Stomach (tissue), 19 donors: ENCODE measurements at regions of chr12 and their contacts with region 1.

Region 1: GRCh38 chr12:19744734-19745218 is 305.5 kb downstream of the AEBP2 start:
- DNase-seq: peak in 1 of 2 donors; percentile 63
- H3K4me3 ChIP-seq: no peak overlapping the region
- H3K27ac ChIP-seq: peak overlapping the region in 1 of 5 donors; percentile 22
- H3K4me1 ChIP-seq: peaks cover 0 to 6% (median 0%) of the 10 kb centered on the region in 4 donors
- H3K27me3 ChIP-seq: no peaks in the 10 kb centered on the region
- CTCF ChIP-seq: no peak
- EP300 ChIP-seq: no peak
- POLR2A ChIP-seq: no peak

Region 2: DNA sequence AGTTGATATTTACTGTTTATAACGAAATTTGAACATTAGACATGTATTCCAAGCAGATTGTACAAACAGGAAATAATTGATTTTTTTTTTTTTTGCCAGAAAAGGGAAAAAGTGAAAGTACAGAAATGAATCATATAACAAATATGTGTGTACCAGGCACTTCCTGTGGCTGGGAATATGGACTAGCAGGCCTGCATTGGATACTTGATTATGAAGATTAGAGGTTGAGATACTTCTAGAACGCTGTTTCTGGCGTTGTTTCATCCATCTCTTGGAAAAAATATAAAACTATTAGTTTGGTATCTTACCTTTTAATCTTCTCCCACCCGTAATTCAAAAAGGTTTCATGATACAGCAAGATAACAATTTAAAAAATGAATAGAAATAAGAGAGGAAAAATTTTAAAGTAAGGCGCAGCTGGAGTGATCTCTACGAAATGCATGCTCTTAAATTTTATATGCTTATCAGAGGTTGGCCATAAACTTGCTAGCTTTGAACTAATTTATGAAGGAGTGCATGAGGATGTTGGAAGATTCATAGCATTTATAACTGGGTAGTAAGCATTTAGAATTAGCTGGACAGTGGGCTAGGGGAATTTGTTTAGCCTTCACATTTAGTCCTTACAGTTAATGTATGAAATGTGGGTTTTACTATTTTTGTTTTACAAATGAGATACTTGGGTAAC is 214.7 kb before region 1 on chr12:
- intact Hi-C with region 1: no loop called
- DNase-seq: no peak
- H3K4me3 ChIP-seq: no peak overlapping the region
- H3K27ac ChIP-seq: no peak overlapping the region
- H3K4me1 ChIP-seq: peaks cover 0 to 10% (median 4%) of the 10 kb centered on the region in 4 donors
- H3K27me3 ChIP-seq: no peaks in the 10 kb centered on the region
- CTCF ChIP-seq: no peak
- EP300 ChIP-seq: no peak
- POLR2A ChIP-seq: no peak

Region 3: GRCh38 chr12:19608039-19608438 is 136.7 kb before region 1 on chr12:
- intact Hi-C with region 1: no loop called
- DNase-seq: no peak
- H3K4me3 ChIP-seq: no peak overlapping the region
- H3K27ac ChIP-seq: no peak overlapping the region
- H3K4me1 ChIP-seq: peaks cover 0 to 7% (median 0%) of the 10 kb centered on the region in 4 donors
- H3K27me3 ChIP-seq: no peaks in the 10 kb centered on the region
- CTCF ChIP-seq: no peak
- EP300 ChIP-seq: no peak
- POLR2A ChIP-seq: no peak

Region 4: GRCh38 chr12:20077618-20078017 is 332.8 kb after region 1 on chr12:
- intact Hi-C with region 1: no loop called
- DNase-seq: no peak
- H3K4me3 ChIP-seq: no peak overlapping the region
- H3K27ac ChIP-seq: no peak overlapping the region
- H3K4me1 ChIP-seq: peaks cover 0 to 3% (median 0%) of the 10 kb centered on the region in 4 donors
- H3K27me3 ChIP-seq: no peaks in the 10 kb centered on the region
- CTCF ChIP-seq: no peak
- EP300 ChIP-seq: no peak
- POLR2A ChIP-seq: no peak

Region 5: DNA sequence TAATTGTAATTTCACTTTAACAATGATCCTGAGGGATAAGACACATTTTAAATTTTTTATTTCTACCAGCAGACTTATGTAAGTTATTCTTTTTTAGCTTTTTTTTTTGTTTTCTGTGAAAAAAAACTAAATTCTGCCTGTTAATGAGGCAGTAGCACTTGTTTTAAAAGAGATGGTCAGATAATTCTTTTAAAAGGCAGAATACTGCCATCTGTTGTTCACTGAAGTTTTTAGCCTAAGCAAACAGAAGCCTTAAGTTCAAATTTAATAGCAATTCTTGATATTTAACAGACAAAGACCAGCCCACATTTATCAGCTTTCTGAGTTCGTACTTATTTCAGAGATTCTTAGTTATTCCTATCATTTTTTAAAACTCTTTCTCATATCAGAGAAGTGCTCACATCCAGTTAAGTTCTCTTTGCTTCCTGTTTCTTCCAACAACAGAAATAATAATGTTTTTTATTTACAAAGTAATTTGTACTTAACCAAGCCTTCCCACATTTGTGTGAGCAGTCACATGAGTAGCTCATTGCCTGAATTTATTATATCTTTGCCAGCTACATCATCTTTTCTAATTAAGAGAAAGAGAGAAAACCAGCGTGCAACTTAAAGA is 857.0 kb after region 1 on chr12:
- intact Hi-C with region 1: loop called (anchors 10 kb)
- DNase-seq: peak in 1 of 2 donors; percentile 69
- H3K4me3 ChIP-seq: no peak overlapping the region
- H3K27ac ChIP-seq: peak overlapping the region in 3 of 5 donors; percentile 24 to 73 (median 69)
- H3K4me1 ChIP-seq: peaks cover 0 to 15% (median 0%) of the 10 kb centered on the region in 4 donors
- H3K27me3 ChIP-seq: no peaks in the 10 kb centered on the region
- CTCF ChIP-seq: peak in 4 of 7 experiments; percentile 9 to 30 (median 19)
- EP300 ChIP-seq: no peak
- POLR2A ChIP-seq: no peak